ENCODE measurements at regions of chr3 and their contacts with region 1.

Region 1: GRCh38 chr3:196942226-196942914 is at the start of gene NCBP2:
- DNase-seq: peak; percentile 95
- ATAC-seq: peak; percentile 92
- H3K4me3 ChIP-seq: peak within 1 kb of the TSS; percentile 88
- H3K27ac ChIP-seq: peak within 1 kb of the TSS; percentile 97
- H3K4me1 ChIP-seq: peaks cover 11% of the 10 kb centered on the region
- H3K27me3 ChIP-seq: no peaks in the 10 kb centered on the region
- CTCF ChIP-seq: peak; percentile 80 to 86 (median 83)
- EP300 ChIP-seq: no peak; a peak in 1 of 4 replicates
- POLR2A ChIP-seq: peak; percentile 97
- RAD21 ChIP-seq: peak; percentile 55
- polyA plus RNA-seq, gene NCBP2: 66.6 to 94.1 TPM

Region 2: DNA sequence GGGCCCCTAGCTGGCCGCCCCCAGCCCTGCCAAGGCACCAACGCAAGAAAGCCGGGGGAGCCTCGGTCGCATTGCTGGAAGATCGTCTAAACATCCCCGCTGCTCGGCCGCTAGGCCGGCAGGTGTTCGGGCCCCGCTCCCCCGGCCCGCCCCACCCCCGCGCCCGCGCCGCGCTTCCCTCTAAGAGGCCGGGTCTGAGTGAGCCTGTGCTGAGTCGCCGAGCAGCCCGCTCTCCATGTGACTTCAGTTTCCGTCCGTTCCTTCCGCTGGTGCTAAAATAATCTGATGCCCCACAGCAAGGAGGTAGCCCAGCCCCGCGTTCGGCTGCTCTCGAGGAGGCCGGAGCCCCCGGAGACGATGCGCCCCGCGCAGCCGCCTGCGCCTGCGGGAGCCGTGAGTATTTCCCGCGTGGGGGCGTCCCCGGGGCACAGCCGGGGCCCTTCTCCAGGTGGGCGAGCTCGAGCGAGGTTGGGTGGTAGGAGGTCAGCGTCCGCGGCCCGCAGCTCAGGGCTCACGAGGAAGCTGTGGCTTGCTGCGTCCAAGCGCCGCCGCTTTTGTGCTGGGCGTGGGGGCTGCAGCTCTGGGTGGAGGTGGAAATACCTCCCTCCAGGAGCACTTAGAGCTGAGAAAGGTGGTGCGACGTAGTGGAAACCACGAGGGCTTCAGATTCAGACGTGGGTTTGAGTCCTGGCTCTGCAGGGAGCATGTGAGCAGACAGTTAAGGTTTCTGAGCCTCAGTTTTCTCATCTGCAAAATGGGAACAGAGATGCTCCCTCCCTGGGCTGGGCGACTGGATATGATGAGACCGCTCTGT is 302.7 kb before region 1 on chr3 and contains the start of gene NRROS:
- CTCF ChIA-PET with region 1: interaction called, 3 read pairs
- POLR2A ChIA-PET with region 1: interaction called, 3 read pairs
- RAD21 ChIA-PET with region 1: no interaction called
- SMC1A ChIA-PET with region 1: interaction called, 3 read pairs
- in situ Hi-C with region 1: no loop called
- intact Hi-C with region 1: loop called (anchors 5 kb)
- DNase-seq: no peak
- ATAC-seq: peak; percentile 59
- H3K4me3 ChIP-seq: peak within 1 kb of the TSS; percentile 78
- H3K27ac ChIP-seq: peak within 1 kb of the TSS; percentile 99
- H3K4me1 ChIP-seq: peaks cover 44% of the 10 kb centered on the region
- H3K27me3 ChIP-seq: no peaks in the 10 kb centered on the region
- CTCF ChIP-seq: no peak
- EP300 ChIP-seq: 0 out of 4 replicates have a peak, but pooled peaks of 1 of the 2 experiments have one; percentile 20
- POLR2A ChIP-seq: peak; percentile 89
- RAD21 ChIP-seq: no peak
- polyA plus RNA-seq, gene NRROS: 0.35 TPM

Region 3: GRCh38 chr3:196711838-196712513 is 230.4 kb before region 1 on chr3 and contains the starts of genes CEP19 and PIGX:
- CTCF ChIA-PET with region 1: no interaction called
- POLR2A ChIA-PET with region 1: no interaction called
- RAD21 ChIA-PET with region 1: no interaction called
- SMC1A ChIA-PET with region 1: no interaction called
- in situ Hi-C with region 1: no loop called
- intact Hi-C with region 1: loop called (anchors 10 kb)
- DNase-seq: peak; percentile 67
- ATAC-seq: peak; percentile 88
- H3K4me3 ChIP-seq: peak within 1 kb of the TSS; percentile 89
- H3K27ac ChIP-seq: peak within 1 kb of the TSS; percentile 89
- H3K4me1 ChIP-seq: no peaks in the 10 kb centered on the region
- H3K27me3 ChIP-seq: no peaks in the 10 kb centered on the region
- CTCF ChIP-seq: no peak
- EP300 ChIP-seq: peak; percentile 53 to 59; a peak in 2 of 4 replicates
- POLR2A ChIP-seq: peak; percentile 84
- RAD21 ChIP-seq: no peak
- polyA plus RNA-seq, gene CEP19: 2.4 to 2.8 TPM
- polyA plus RNA-seq, gene PIGX: 3.8 to 9.7 TPM

Region 4: GRCh38 chr3:196837819-196838420 is 104.5 kb before region 1 on chr3:
- CTCF ChIA-PET with region 1: interaction called, 39 read pairs
- POLR2A ChIA-PET with region 1: interaction called, 3 read pairs
- RAD21 ChIA-PET with region 1: interaction called, 18 read pairs
- SMC1A ChIA-PET with region 1: interaction called, 8 read pairs
- in situ Hi-C with region 1: no loop called
- intact Hi-C with region 1: loop called (anchors 5 kb)
- DNase-seq: peak; percentile 20
- ATAC-seq: peak; percentile 96
- H3K4me3 ChIP-seq: no peak overlapping the region
- H3K27ac ChIP-seq: no peak overlapping the region
- H3K4me1 ChIP-seq: no peaks in the 10 kb centered on the region
- H3K27me3 ChIP-seq: no peaks in the 10 kb centered on the region
- CTCF ChIP-seq: peak; percentile 89 to 97 (median 94)
- EP300 ChIP-seq: no peak
- POLR2A ChIP-seq: no peak
- RAD21 ChIP-seq: peak; percentile 96

Region 5: GRCh38 chr3:196867507-196868296 is 74.7 kb before region 1 on chr3 and contains the start of gene SENP5:
- CTCF ChIA-PET with region 1: interaction called, 7 read pairs
- POLR2A ChIA-PET with region 1: interaction called, 40 read pairs
- RAD21 ChIA-PET with region 1: interaction called, 46 read pairs
- SMC1A ChIA-PET with region 1: interaction called, 10 read pairs
- in situ Hi-C with region 1: no loop called
- intact Hi-C with region 1: loop called (anchors 1 kb)
- DNase-seq: peak; percentile 43
- ATAC-seq: peak; percentile 95
- H3K4me3 ChIP-seq: peak within 1 kb of the TSS; percentile 73
- H3K27ac ChIP-seq: peak within 1 kb of the TSS; percentile 82
- H3K4me1 ChIP-seq: peaks cover 4% of the 10 kb centered on the region; the same call in 1 of the 2 replicates
- H3K27me3 ChIP-seq: no peaks in the 10 kb centered on the region
- CTCF ChIP-seq: no peak
- EP300 ChIP-seq: no peak
- POLR2A ChIP-seq: peak; percentile 100
- RAD21 ChIP-seq: no peak
- polyA plus RNA-seq, gene SENP5: 6.4 to 9.6 TPM

Region 6: GRCh38 chr3:196969660-196970546 is 27.5 kb after region 1 on chr3:
- CTCF ChIA-PET with region 1: interaction called, 7 read pairs
- POLR2A ChIA-PET with region 1: no interaction called
- RAD21 ChIA-PET with region 1: interaction called, 5 read pairs
- SMC1A ChIA-PET with region 1: no interaction called
- in situ Hi-C with region 1: no loop called
- intact Hi-C with region 1: loop called (anchors 2 kb)
- DNase-seq: no peak
- ATAC-seq: peak; percentile 85
- H3K4me3 ChIP-seq: peak overlapping the region; percentile 90
- H3K27ac ChIP-seq: peak overlapping the region; percentile 18; the same call in 1 of the 2 replicates
- H3K4me1 ChIP-seq: peaks cover 3% of the 10 kb centered on the region
- H3K27me3 ChIP-seq: no peaks in the 10 kb centered on the region; a peak in 1 of 4 replicates
- CTCF ChIP-seq: peak; percentile 61 to 82 (median 69); a peak in 5 of 6 replicates
- EP300 ChIP-seq: no peak
- POLR2A ChIP-seq: peak; percentile 45; the same call in 1 of the 2 replicates
- RAD21 ChIP-seq: peak; percentile 70

Measured in GM12878 (cell line).